ENCODE measurements at regions of chr22 and their contacts with region 1.

Region 1: GRCh38 chr22:21666786-21667185 is 974 bp downstream of the PPIL2 start:
- DNase-seq: no peak
- ATAC-seq: no peak
- H3K4me3 Mint-ChIP-seq: peak overlapping the region; percentile 94
- H3K27ac Mint-ChIP-seq: peak overlapping the region; percentile 97
- H3K4me1 Mint-ChIP-seq: peaks cover 23% of the 10 kb centered on the region
- H3K27me3 Mint-ChIP-seq: no peaks in the 10 kb centered on the region

Region 2: DNA sequence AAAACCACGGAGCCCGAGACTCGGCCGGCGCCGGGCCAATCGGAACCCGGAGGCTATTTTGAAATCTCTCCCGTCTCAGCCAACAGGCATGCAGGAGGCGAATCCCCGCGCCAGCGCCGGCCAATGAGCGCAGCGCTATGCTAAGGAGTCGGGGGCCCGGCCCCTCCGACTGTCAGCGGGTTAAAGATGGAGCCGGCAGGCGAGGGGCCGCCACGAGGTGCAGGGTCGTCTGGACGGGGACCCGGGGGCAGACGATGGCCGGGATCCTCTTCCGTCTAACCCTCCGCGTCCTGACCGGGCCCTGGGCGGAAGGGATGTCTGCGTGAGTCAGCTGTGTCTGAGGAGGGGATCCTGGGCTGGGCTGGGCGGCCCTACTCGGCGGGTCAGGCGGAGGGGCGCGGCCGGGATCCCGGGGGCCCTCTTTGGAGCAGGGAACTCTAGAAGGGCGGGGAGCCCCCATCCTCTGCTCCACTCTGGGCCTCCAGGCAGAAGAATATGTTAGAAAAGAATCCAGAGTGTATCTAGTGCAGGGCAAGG is 14.7 kb before region 1 on chr22:
- POLR2A ChIA-PET with region 1: interaction called, 11 read pairs
- DNase-seq: peak; percentile 89
- ATAC-seq: peak; percentile 98
- H3K4me3 Mint-ChIP-seq: peak overlapping the region; percentile 83
- H3K27ac Mint-ChIP-seq: peak overlapping the region; percentile 88
- H3K4me1 Mint-ChIP-seq: peaks cover 24% of the 10 kb centered on the region
- H3K27me3 Mint-ChIP-seq: no peaks in the 10 kb centered on the region